Activated CD4-positive, alpha-beta memory T cell treated with anti-CD3 and anti-CD28 coated beads for 36 hours (primary cell): ENCODE measurements at regions of chr18 and their contacts with region 1.

Region 1: GRCh38 chr18:31685097-31686082 is 1.0 kb upstream of the B4GALT6 start:
- DNase-seq: peak; percentile 69
- H3K4me3 Mint-ChIP-seq: peak overlapping the region; percentile 78
- H3K27ac Mint-ChIP-seq: peak overlapping the region; percentile 45
- H3K4me1 Mint-ChIP-seq: peaks cover 24% of the 10 kb centered on the region
- H3K27me3 Mint-ChIP-seq: peaks cover 36% of the 10 kb centered on the region

Region 2: GRCh38 chr18:31356025-31356424 is 329.4 kb before region 1 on chr18:
- CTCF ChIA-PET with region 1: no interaction called
- POLR2A ChIA-PET with region 1: no interaction called
- intact Hi-C with region 1: no loop called
- DNase-seq: no peak
- H3K4me3 Mint-ChIP-seq: no peak overlapping the region
- H3K27ac Mint-ChIP-seq: no peak overlapping the region
- H3K4me1 Mint-ChIP-seq: no peaks in the 10 kb centered on the region
- H3K27me3 Mint-ChIP-seq: no peaks in the 10 kb centered on the region

Region 3: GRCh38 chr18:31497837-31498573 is 187.4 kb before region 1 on chr18 and contains the start of gene DSG2:
- CTCF ChIA-PET with region 1: no interaction called
- POLR2A ChIA-PET with region 1: no interaction called
- intact Hi-C with region 1: loop called (anchors 10 kb)
- DNase-seq: peak; percentile 27
- H3K4me3 Mint-ChIP-seq: peak within 1 kb of the TSS; percentile 57
- H3K27ac Mint-ChIP-seq: no peak within 1 kb of the TSS
- H3K4me1 Mint-ChIP-seq: peaks cover 4% of the 10 kb centered on the region
- H3K27me3 Mint-ChIP-seq: peaks cover 48% of the 10 kb centered on the region
- total RNA-seq, gene DSG2: 0.19 to 0.31 TPM

Region 4: GRCh38 chr18:31603315-31603714 is 82.1 kb before region 1 on chr18:
- CTCF ChIA-PET with region 1: no interaction called
- POLR2A ChIA-PET with region 1: no interaction called
- intact Hi-C with region 1: loop called (anchors 2 kb)
- DNase-seq: peak; percentile 48
- H3K4me3 Mint-ChIP-seq: no peak overlapping the region
- H3K27ac Mint-ChIP-seq: no peak overlapping the region
- H3K4me1 Mint-ChIP-seq: no peaks in the 10 kb centered on the region
- H3K27me3 Mint-ChIP-seq: peaks cover 7% of the 10 kb centered on the region

Region 5: GRCh38 chr18:31648966-31649429 is 36.4 kb before region 1 on chr18:
- CTCF ChIA-PET with region 1: no interaction called
- POLR2A ChIA-PET with region 1: no interaction called
- intact Hi-C with region 1: loop called (anchors 5 kb)
- DNase-seq: no peak
- H3K4me3 Mint-ChIP-seq: no peak overlapping the region
- H3K27ac Mint-ChIP-seq: no peak overlapping the region
- H3K4me1 Mint-ChIP-seq: peaks cover 12% of the 10 kb centered on the region
- H3K27me3 Mint-ChIP-seq: peaks cover 23% of the 10 kb centered on the region

Region 6: DNA sequence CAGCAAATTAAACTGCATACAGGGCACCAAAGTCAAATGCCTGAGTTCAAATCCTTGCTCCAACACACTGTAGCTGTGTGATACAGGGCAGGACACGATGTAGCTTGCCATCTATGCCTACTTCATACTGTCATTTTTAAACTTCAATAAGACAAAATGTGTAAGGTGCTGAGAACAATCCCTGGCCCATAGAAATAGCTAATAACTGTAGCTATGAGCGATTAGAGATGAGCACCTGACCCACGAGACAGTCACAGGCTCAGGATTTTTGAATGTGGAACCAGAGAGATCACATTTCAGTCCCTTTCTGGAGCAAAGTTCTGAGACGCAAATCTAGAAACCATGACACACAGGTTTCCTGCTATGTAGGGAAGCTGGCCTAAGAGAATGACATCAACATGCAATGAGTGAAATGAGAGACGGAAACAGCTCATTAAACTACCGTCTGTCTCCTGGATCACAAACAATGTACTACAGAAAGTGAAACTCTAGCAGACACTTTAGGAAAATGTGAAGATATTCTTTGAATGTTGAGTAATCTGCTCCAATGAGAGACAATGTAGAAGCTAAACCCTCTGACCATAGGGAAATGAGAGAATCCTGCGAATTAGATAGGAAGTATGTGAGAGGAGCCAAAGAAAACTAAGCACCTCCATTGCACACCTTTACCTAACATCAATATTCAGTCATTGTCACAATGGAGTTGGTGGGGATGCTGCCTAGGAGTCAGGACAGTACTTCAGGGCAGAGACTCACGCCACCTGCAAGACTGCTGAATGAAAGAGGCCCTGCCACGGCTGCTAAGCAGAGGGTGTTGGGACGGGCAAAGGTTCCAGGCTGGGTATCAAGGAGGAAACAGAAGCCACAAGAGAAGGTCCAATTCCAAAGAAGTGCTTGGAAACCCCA is 26.5 kb before region 1 on chr18:
- CTCF ChIA-PET with region 1: interaction called, 8 read pairs
- POLR2A ChIA-PET with region 1: interaction called, 5 read pairs
- intact Hi-C with region 1: loop called (anchors 1 kb)
- DNase-seq: peak; percentile 34
- H3K4me3 Mint-ChIP-seq: no peak overlapping the region
- H3K27ac Mint-ChIP-seq: peak overlapping the region; percentile 60
- H3K4me1 Mint-ChIP-seq: peaks cover 23% of the 10 kb centered on the region
- H3K27me3 Mint-ChIP-seq: peaks cover 2% of the 10 kb centered on the region